Mammary epithelial cell (primary cell): ENCODE measurements at regions of chr19 and their contacts with region 1.

Region 1: GRCh38 chr19:15810335-15810734 is 5.1 kb downstream of the OR10H1 start:
- DNase-seq: peak; percentile 38
- H3K4me3 ChIP-seq: no peak overlapping the region
- H3K27ac ChIP-seq: no peak overlapping the region
- H3K4me1 ChIP-seq: peaks cover 13% of the 10 kb centered on the region
- H3K27me3 ChIP-seq: peaks cover 2% of the 10 kb centered on the region
- CTCF ChIP-seq: peak in 1 of 2 donors; percentile 62

Region 2: DNA sequence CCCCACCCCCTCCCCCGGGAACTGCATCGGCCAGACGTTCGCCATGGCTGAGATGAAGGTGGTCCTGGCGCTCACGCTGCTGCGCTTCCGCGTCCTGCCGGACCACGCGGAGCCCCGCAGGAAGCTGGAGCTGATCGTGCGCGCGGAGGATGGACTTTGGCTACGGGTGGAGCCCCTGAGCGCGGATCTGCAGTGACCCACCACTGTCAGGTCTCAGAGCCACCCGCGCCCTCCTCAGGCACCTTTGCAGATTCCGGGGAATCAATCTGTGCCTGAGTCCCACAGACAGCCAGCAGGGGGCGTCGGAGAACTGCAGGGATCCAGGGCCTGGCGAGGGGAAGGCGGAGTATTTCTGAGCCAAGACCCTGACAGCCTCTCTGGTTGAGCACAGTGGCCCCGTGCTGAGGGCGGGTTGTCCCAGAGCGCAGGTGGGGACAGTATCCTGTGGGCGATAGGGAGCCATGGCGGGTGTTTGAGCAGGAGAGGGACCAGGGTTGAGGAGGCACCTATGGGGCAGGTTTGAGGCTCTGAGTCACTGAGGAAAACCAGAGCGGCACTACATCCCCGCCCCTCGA is 225.7 kb before region 1 on chr19:
- CTCF ChIA-PET with region 1: no interaction called
- dilution Hi-C with region 1: no loop called
- in situ Hi-C with region 1: no loop called
- intact Hi-C with region 1: loop called (anchors 1 kb)
- DNase-seq: peak; percentile 45
- H3K4me3 ChIP-seq: no peak overlapping the region
- H3K27ac ChIP-seq: no peak overlapping the region
- H3K4me1 ChIP-seq: peaks cover 3% of the 10 kb centered on the region
- H3K27me3 ChIP-seq: no peaks in the 10 kb centered on the region
- CTCF ChIP-seq: peak; percentile 89 to 97

Region 3: GRCh38 chr19:15740785-15741184 is 69.5 kb before region 1 on chr19:
- CTCF ChIA-PET with region 1: no interaction called
- dilution Hi-C with region 1: loop called (anchors 10 kb)
- in situ Hi-C with region 1: no loop called
- intact Hi-C with region 1: no loop called
- DNase-seq: no peak
- H3K4me3 ChIP-seq: no peak overlapping the region
- H3K27ac ChIP-seq: no peak overlapping the region
- H3K4me1 ChIP-seq: no peaks in the 10 kb centered on the region
- H3K27me3 ChIP-seq: peaks cover 2% of the 10 kb centered on the region
- CTCF ChIP-seq: no peak

Region 4: GRCh38 chr19:15869109-15869555 is 58.8 kb after region 1 on chr19:
- CTCF ChIA-PET with region 1: no interaction called
- dilution Hi-C with region 1: no loop called
- in situ Hi-C with region 1: no loop called
- intact Hi-C with region 1: loop called (anchors 1 kb)
- DNase-seq: peak; percentile 75
- H3K4me3 ChIP-seq: no peak overlapping the region
- H3K27ac ChIP-seq: no peak overlapping the region
- H3K4me1 ChIP-seq: peaks cover 12% of the 10 kb centered on the region
- H3K27me3 ChIP-seq: no peaks in the 10 kb centered on the region
- CTCF ChIP-seq: peak; percentile 80 to 87